Panc1 (cell line): ENCODE measurements at regions of chr1 and their contacts with region 1.

Region 1: DNA sequence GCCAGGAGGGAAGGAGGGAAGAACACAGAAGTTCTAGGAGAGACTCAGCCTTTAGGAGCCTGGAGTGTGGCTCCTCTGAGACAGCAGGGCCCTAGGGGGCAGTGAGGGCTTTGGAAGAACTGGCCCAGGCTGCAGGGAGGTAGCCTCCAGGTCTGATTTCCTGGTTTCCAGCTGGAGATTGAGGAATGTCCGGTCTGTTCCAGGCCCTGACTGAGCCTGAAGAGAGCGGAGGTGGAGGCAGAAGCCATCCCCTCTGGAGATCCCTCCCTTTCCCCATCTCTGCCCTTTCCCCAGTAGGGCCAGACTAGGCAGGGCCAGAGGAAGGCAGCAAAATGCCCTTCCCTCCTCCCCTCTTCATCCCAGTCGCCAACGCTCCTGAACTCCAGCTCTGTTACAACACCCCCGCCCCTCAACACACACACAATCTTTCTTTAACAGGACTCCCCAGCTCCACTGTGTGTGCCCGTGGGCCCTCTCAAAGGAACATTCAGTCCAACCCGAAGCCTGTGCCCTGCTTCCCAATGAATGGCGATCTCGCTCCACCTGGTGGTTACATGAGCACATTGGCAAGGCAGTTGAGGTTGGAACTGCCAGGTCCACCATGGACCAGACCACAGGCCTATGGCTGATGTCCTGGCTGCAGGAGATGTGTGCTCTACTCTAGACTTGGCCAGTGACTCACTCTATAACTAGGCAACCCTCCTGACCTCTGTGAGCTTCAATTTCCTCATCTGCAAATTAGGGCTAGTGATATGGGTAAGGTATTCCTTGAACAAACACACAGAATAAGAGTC is 32.0 kb downstream of the MAP7D1 start:
- DNase-seq: peak; percentile 81
- ATAC-seq: peak; percentile 97
- H3K4me3 ChIP-seq: peak overlapping the region in 1 of 2 experiments; percentile 21; a peak in 1 of 4 replicates
- H3K27ac ChIP-seq: peak overlapping the region; percentile 82
- H3K4me1 ChIP-seq: peaks cover 9% of the 10 kb centered on the region
- H3K27me3 ChIP-seq: no peaks in the 10 kb centered on the region
- CTCF ChIP-seq: peak; percentile 91

Region 2: DNA sequence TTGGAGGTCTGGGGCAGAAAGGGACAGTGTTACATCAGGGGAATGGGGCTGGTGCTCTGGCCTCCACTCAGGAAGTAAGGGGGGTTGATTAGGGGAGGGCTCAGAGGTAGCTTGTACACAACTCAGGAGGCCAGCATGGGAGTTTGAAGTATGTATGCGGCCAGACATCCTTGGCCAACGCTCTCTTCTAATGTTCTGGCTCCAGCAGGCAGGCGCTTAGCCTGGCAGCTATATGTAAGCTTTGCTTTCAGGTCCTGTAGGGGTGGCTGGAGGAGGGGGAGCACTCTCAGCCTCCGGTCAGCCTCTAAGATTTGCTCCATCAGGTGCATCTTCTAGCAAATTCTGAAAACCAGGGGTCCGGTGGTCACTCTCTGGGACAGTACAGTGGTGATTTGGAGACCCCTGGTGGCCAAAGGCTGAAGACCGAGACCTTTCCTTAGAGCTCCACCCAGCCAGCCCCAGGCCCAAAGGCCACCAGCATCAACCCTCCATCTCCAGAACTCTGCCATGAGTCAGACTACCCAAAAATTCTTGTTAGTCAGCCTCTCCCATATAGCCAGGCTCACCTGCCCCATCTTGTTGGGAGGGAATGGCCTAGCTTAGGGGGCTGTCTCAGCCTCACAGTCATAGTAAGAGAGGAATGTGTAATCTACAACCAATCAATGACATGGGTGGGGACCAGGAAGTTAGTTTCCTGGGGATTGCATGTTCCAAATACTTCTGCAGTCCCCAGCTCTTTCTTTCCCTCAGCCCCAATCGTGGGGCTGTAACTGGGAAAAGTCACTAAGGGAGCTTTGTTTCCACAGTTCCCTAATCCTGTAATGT is 53.3 kb before region 1 on chr1:
- CTCF ChIA-PET with region 1: interaction called, 12 read pairs
- POLR2A ChIA-PET with region 1: no interaction called
- in situ Hi-C with region 1: no loop called
- intact Hi-C with region 1: no loop called
- DNase-seq: no peak
- ATAC-seq: peak; percentile 80
- H3K4me3 ChIP-seq: no peak overlapping the region
- H3K27ac ChIP-seq: no peak overlapping the region
- H3K4me1 ChIP-seq: peaks cover 3% of the 10 kb centered on the region; the same call in 1 of the 2 replicates
- H3K27me3 ChIP-seq: no peaks in the 10 kb centered on the region
- CTCF ChIP-seq: peak; percentile 87